Breast epithelium (tissue), 4 donors: ENCODE measurements at regions of chr11 and their contacts with region 1.

Region 1: GRCh38 chr11:32071811-32072210 is 19.1 kb upstream of the RCN1 start:
- DNase-seq: no peak
- H3K4me3 ChIP-seq: no peak overlapping the region
- H3K27ac ChIP-seq: no peak overlapping the region
- H3K4me1 ChIP-seq: no peaks in the 10 kb centered on the region
- H3K27me3 ChIP-seq: peaks cover 0 to 10% of the 10 kb centered on the region in 2 donors
- CTCF ChIP-seq: peak in 2 of 3 donors; percentile 9 to 16
- POLR2A ChIP-seq: no peak

Region 2: GRCh38 chr11:31598454-31598853 is 473.4 kb before region 1 on chr11:
- intact Hi-C with region 1: loop called (anchors 10 kb)
- DNase-seq: no peak
- H3K4me3 ChIP-seq: no peak overlapping the region
- H3K27ac ChIP-seq: no peak overlapping the region
- H3K4me1 ChIP-seq: no peaks in the 10 kb centered on the region
- H3K27me3 ChIP-seq: no peaks in the 10 kb centered on the region
- CTCF ChIP-seq: no peak
- POLR2A ChIP-seq: no peak

Region 3: GRCh38 chr11:32391956-32392553 is 320.2 kb after region 1 on chr11:
- intact Hi-C with region 1: loop called (anchors 5 kb)
- DNase-seq: no peak
- H3K4me3 ChIP-seq: no peak overlapping the region
- H3K27ac ChIP-seq: no peak overlapping the region
- H3K4me1 ChIP-seq: no peaks in the 10 kb centered on the region
- H3K27me3 ChIP-seq: no peaks in the 10 kb centered on the region
- CTCF ChIP-seq: no peak
- POLR2A ChIP-seq: no peak